AG04449 (cell line): ENCODE measurements at regions of chrX and their contacts with region 1.

Region 1: DNA sequence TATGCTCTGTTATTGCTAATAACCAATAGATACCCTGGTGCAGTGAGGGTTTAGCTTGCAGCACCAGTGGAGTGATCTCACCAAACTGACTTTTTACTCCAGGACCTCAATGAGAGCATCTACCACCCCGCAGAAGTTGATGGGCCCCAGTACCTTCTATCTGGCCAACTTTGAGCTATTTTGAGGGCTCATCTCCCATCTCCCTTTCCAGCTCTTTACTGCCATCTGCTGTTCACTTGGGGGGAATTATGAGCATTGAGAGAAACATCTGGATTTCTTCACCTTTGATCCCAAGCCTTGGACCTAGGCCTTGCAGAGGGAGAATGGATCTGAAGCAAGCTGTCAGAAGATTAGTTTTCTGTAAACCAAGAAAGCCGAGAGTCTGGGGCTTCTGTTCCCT is 143.6 kb downstream of the TMEM164 start:
- DNase-seq: no peak
- H3K4me3 ChIP-seq: no peak overlapping the region
- CTCF ChIP-seq: peak; percentile 53

Region 2: DNA sequence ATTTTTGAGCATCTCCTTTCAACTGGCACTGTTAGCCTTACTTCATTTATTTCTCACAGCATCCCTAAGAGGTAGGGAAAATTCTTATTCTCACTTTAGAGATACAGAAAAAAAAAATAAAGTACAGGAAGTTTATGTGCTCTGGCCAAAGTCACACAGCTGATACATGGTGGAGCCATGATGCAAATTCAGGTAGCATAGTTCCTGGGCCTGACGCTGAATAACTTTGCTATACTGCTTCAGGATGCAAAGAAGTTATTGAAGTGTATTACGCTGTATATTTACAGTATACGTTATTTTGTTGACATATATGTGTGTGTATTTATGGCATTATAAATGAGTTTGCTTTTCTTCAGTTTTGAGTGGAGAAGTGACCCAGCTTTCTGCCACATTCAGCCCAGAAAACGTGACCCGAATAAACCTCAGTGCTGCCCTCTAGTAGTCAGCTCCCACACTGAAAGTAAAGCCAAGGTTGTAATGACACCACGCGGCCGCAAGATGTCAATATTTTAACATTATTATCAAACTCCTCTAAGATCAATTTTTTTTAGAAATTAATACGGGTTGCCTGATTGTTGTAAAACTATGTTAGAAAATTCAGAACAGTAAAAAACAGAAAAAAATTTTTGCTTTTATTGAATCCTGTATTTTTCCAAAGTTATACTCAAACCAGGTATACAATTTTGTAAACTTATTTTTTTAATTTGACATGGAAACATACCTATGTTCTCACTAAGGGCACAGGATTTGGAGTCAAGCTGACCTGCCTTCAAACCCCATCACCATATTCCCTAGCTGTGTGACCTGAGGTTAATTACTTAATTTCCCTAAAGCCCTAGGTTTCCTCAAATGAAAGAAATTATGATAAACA is 660.8 kb before region 1 on chrX:
- CTCF ChIA-PET with region 1: interaction called, 12 read pairs
- POLR2A ChIA-PET with region 1: no interaction called
- DNase-seq: no peak
- H3K4me3 ChIP-seq: no peak overlapping the region
- CTCF ChIP-seq: peak; percentile 75

Region 3: GRCh38 chrX:109911046-109911445 is 235.5 kb before region 1 on chrX:
- CTCF ChIA-PET with region 1: interaction called, 125 read pairs
- POLR2A ChIA-PET with region 1: no interaction called
- DNase-seq: no peak
- H3K4me3 ChIP-seq: no peak overlapping the region
- CTCF ChIP-seq: no peak

Region 4: GRCh38 chrX:110103344-110103743 is 43.2 kb before region 1 on chrX:
- CTCF ChIA-PET with region 1: interaction called, 10 read pairs
- POLR2A ChIA-PET with region 1: no interaction called
- DNase-seq: no peak
- H3K4me3 ChIP-seq: no peak overlapping the region
- CTCF ChIP-seq: no peak

Region 5: DNA sequence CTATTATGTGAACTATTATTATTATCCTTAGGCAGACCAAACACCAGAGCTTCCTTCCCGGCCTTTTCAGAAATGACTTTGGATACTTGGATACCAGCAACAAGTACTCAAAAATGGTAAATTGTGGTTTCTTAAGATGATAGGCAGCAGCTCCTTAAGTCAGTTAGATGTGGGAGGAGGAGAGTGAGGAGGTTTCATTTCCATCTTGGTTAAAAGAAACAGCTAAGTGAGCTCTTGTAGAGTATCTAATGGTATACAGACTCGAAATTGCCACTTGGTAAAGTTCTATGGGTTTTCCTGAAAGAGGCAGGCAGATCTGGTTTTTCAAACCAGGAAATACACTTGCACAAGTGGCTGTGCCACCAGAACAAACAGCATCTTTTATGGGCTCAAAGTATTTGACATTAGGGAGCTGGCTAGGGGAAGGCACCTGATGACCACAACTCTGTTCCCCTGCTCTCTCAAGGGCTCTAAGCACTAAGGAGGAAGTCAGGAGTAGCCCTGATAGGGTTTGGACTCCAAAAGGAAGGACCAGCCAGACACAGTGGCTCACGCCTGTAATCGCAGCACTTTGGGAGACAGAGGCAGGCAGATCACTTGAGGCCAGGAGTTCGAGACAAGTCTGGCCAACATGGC is 12.7 kb before region 1 on chrX:
- CTCF ChIA-PET with region 1: interaction called, 45 read pairs
- POLR2A ChIA-PET with region 1: no interaction called
- DNase-seq: no peak
- H3K4me3 ChIP-seq: no peak overlapping the region
- CTCF ChIP-seq: no peak

Region 6: GRCh38 chrX:110276778-110277177 is 130.3 kb after region 1 on chrX:
- CTCF ChIA-PET with region 1: no interaction called
- POLR2A ChIA-PET with region 1: no interaction called
- DNase-seq: no peak
- H3K4me3 ChIP-seq: no peak overlapping the region
- CTCF ChIP-seq: no peak

Region 7: DNA sequence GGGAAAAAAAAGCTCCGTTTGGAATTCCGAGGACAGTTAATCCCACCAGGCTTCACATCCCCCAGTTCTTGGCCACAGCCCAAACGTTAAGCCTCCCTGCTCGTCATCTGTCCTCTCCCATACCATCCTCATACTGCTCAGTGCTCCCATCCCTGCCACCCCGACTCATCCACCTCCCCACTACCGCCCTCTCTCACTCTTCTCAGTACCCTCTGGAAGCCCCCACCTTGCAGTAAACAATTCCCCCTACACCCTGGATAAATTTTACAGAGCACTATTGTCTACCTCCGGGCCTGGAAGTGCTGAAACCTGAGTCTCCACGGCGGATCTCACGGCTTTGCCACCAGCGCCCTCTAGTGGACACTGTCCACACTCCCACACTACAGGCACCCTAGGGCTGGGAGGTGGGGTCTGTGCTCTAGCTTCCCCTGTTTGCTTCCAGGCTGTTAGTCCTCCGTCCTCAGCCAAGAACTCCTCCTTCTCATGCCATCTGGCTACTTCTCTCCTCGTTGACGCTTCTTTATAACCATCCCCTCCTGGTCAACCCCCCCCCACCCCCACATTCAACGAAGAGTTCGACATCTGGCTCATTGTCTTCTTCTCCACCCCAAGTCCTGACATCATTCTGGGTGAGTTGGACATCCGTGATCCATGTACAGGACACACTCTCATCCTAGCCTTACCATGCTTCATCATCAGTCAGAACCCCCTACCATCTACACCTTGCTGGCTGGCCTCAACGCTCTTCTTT is 266.6 kb after region 1 on chrX:
- CTCF ChIA-PET with region 1: interaction called, 970 read pairs
- POLR2A ChIA-PET with region 1: no interaction called
- DNase-seq: no peak
- H3K4me3 ChIP-seq: no peak overlapping the region
- CTCF ChIP-seq: peak; percentile 79